Common myeloid progenitor, CD34-positive (primary cell): ENCODE measurements at regions of chr2 and their contacts with region 1.

Region 1: DNA sequence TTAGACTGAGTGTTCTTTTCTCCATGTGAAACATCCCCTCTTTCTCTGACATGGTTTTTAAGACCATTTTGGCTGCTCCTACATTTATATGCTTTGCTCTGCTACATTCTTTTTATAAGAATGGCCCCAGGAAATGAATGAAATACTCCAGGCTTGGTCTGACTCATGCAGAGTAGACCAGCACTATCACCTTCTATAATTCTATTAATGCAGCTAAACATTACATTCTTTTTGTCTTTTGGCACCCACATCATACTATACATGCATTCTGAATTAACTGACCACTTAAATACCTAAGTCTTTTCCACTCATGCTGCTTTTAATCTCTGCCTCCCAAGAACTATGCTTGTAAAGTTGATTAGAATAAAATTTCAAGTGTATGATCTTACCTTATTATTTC is 94.1 kb downstream of the AAK1 start:
- DNase-seq: no peak
- H3K4me3 ChIP-seq: no peak overlapping the region
- H3K27ac ChIP-seq: no peak overlapping the region
- H3K4me1 ChIP-seq: peaks cover 0 to 4% (median 0%) of the 10 kb centered on the region in 4 experiments
- H3K27me3 ChIP-seq: no peaks in the 10 kb centered on the region

Region 2: DNA sequence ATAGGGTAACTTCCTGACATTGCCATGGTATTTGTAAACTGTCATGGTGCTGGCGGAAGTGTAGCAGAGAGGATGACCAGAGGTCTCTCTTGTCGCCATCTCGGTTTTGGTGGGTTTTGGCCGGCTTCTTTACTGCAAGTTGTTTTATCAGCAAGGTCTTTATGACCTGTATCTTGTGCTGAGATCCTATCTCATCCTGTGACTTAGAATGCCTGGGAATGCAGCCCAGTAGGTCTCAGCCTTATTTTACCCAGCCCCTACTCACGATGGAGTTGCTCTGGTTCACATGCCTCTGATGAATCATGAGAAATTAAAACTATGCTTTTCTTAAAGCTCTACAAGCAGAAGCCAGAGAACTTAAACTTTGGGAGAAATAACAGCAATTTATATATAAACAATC is 99.5 kb before region 1 on chr2:
- CTCF ChIA-PET with region 1: no interaction called
- POLR2A ChIA-PET with region 1: no interaction called
- DNase-seq: no peak
- H3K4me3 ChIP-seq: no peak overlapping the region
- H3K27ac ChIP-seq: no peak overlapping the region
- H3K4me1 ChIP-seq: no peaks in the 10 kb centered on the region
- H3K27me3 ChIP-seq: no peaks in the 10 kb centered on the region

Region 3: DNA sequence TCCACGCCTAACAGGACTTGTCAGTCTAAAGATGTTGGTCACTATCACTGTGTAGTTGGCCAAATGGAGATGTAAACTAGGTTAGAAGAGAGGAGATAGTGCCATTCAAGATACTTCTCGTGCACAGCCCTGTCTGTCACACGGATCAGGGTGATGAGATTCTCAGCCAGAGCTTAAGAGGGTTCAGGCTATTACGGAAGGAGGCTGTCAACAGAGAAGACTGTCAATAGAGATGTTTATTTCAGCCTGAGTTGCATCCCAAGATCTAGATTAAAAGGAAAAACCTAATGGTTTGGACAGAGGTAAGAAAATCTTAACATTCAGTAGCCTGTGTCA is 10.7 kb after region 1 on chr2:
- CTCF ChIA-PET with region 1: interaction called, 17 read pairs
- POLR2A ChIA-PET with region 1: no interaction called
- DNase-seq: no peak
- H3K4me3 ChIP-seq: no peak overlapping the region
- H3K27ac ChIP-seq: no peak overlapping the region
- H3K4me1 ChIP-seq: peaks cover 6 to 22% (median 12%) of the 10 kb centered on the region in 4 experiments
- H3K27me3 ChIP-seq: no peaks in the 10 kb centered on the region

Region 4: GRCh38 chr2:69680001-69680675 is 130.7 kb after region 1 on chr2:
- CTCF ChIA-PET with region 1: no interaction called
- POLR2A ChIA-PET with region 1: no interaction called
- DNase-seq: peak in 2 of 3 donors; percentile 50 to 62
- H3K4me3 ChIP-seq: no peak overlapping the region
- H3K27ac ChIP-seq: no peak overlapping the region
- H3K4me1 ChIP-seq: peaks cover 9 to 26% (median 18%) of the 10 kb centered on the region in 4 experiments
- H3K27me3 ChIP-seq: no peaks in the 10 kb centered on the region